ENCODE measurements at regions of chr16 and their contacts with region 1.

Region 1: DNA sequence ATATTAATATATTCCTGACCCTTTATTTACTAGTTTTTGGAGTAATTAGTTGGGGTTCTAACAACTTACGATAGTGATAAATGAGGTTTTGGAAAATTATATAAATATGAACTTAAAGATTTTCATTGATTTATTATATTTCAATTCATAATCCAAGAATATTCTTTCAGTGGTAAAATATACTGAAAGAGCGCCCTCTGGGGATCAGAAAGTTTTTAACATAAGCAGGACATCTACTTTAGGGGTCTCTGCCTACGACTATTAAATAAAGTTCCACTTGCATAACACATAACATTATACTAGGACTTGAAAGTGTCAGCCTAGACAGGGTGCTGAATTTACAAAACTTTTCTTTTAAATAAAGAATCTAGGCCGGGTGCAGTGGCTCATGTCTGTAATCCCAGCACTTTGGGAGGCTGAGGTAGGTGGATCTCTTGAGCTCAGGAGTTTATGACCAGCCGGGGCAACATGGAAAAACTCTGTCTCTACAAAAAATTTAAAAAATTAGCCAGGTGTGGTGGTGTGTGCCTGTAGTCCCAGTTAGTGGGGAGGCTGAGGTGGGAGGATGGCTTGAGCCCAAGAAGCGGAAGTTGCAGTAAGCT is 15.6 kb downstream of the RFWD3 start:
- DNase-seq: no peak
- ATAC-seq: no peak
- H3K4me3 Mint-ChIP-seq: no peak overlapping the region
- H3K27ac Mint-ChIP-seq: peak overlapping the region; percentile 48
- H3K4me1 Mint-ChIP-seq: peaks cover 30% of the 10 kb centered on the region
- H3K27me3 Mint-ChIP-seq: no peaks in the 10 kb centered on the region

Region 2: DNA sequence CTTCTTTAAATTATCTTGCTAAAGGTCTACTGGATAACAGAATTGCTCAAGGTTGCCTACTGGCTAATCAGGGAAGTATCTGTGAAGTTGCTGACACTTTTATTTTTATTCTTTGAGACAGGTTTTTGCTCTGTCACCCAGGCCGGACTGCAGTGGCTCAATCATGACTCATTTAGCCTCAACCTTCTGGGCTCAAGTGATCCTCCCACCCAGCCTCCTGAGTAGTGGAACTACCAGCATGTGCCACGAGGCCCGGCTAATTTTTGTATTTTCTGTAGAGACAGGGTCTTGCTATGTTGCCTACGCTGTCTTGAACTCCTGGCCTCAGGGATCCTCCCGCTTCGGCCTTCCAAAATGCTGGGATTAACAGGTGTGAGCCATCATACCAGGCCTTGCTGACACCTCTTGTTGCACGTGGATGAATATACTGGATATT is 87.2 kb before region 1 on chr16:
- CTCF ChIA-PET with region 1: no interaction called
- POLR2A ChIA-PET with region 1: no interaction called
- DNase-seq: no peak
- ATAC-seq: no peak
- H3K4me3 Mint-ChIP-seq: no peak overlapping the region
- H3K27ac Mint-ChIP-seq: no peak overlapping the region
- H3K4me1 Mint-ChIP-seq: peaks cover 41% of the 10 kb centered on the region
- H3K27me3 Mint-ChIP-seq: no peaks in the 10 kb centered on the region

Region 3: DNA sequence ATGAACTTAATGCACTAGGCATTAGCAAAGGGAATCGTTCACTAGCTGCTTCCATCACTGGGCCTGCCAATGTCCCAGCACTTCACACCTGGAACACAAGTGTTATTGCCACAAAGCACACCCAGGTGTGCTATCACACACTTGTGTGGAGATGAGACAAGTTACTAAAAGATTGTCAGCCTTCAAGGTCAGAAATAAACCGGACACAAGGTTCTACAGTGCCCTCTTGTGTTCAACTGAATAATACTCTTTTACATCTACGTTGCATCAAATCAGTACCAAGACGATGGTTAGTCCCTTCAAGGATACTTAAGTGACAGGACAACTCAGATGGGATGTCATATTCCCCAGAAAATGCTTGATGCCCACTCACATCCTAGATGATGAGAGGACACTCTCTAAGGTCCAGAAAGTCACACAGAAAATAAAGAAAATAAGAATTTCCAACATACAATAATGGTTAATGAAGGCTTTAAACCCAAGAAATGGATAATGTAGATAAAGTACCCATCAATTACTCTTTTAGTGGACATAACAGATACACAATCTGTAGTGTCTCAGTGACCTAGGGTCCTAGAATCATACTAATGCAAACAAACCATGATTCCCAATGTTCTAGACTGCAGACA is 27.7 kb before region 1 on chr16:
- CTCF ChIA-PET with region 1: interaction called, 12 read pairs
- POLR2A ChIA-PET with region 1: interaction called, 3 read pairs
- DNase-seq: no peak
- ATAC-seq: peak; percentile 50
- H3K4me3 Mint-ChIP-seq: no peak overlapping the region
- H3K27ac Mint-ChIP-seq: peak overlapping the region; percentile 31
- H3K4me1 Mint-ChIP-seq: peaks cover 11% of the 10 kb centered on the region
- H3K27me3 Mint-ChIP-seq: no peaks in the 10 kb centered on the region

Region 4: DNA sequence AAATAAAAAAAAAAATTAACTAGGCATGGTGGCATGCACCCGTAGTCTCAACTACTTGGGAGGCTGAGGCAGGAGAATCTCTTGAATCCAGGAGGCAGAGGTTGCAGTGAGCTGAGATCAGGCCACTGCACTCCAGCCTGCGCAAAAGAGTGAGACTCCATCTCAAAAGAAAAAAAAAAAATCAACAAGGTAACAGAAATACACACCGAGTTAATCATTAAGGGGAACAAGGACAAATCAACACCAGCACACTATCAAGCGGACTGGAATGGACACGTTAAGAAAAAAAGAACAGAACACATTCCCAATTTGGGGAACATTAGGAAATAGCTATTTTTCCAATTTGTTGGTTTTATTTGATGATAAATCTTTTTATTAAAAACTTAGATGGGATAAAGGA is 15.8 kb before region 1 on chr16:
- CTCF ChIA-PET with region 1: interaction called, 12 read pairs
- POLR2A ChIA-PET with region 1: no interaction called
- DNase-seq: no peak
- ATAC-seq: no peak
- H3K4me3 Mint-ChIP-seq: no peak overlapping the region
- H3K27ac Mint-ChIP-seq: no peak overlapping the region
- H3K4me1 Mint-ChIP-seq: no peaks in the 10 kb centered on the region
- H3K27me3 Mint-ChIP-seq: no peaks in the 10 kb centered on the region